Vagina (tissue), 2 donors: ENCODE measurements at regions of chr3 and their contacts with region 1.

Region 1: DNA sequence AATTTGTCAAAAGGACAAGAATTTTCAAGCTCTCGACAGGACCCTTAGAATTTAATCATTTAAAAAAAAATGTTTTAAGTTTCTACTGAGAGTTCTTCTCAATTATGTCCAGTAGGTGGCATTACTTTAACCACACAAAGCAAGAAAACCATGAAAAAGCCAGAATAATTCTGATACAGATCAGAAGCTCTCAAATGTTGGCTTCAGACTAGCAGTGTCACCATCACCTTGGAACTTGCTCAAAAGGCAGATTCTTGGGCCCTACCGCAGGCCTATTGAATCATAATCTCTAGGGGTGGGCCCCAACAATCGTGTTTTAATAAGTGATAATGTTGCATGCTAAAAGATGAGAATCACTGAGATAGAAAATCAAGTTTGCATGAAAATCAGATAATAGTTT is 99.5 kb upstream of the KCNMB2 start:
- DNase-seq: no peak
- H3K4me3 ChIP-seq: no peak overlapping the region
- H3K27ac ChIP-seq: no peak overlapping the region
- H3K4me1 ChIP-seq: peaks cover 4% of the 10 kb centered on the region
- H3K27me3 ChIP-seq: no peaks in the 10 kb centered on the region
- CTCF ChIP-seq: peak in 2 of 3 experiments; percentile 39 to 43
- POLR2A ChIP-seq: no peak

Region 2: DNA sequence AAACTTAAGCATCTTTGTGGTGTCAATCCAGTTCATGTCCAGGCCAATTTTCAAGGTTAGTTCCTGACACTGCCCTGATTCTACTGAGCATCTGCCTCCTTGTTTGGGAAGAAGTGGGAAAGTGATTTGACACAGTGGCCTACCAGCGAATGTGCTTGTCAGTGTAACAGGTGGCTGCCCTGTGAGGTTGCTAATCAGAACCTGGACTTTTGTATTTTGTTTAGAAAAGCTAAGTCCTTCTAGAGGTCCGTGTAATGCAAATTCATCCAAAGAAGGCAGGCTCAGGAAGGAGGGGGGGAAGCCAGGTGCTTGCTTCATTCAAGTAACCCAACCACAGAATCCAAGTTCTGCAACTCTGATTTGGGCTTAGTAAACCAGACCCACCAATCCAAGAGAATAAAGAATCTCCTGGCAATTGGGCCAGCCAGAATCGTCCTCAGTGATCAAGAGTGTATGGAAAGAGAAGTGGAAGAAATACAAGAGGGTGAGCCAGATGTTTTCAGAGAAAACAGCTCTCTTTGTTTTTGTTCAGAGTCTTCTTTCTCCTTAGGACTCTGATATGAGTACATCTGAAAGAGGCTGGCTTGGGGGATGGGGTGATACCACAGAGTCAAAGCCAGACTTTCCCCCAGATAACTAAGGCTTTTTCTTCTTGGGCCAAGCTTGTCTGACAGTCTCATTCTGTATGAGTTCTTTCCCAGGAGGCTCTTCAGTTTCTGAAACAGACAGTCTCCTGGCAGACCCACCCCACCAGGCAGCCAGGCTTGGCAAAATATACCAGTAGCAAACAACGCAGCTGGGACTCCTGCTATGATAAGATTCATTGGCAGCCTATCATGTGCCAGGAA is 730.6 kb before region 1 on chr3:
- intact Hi-C with region 1: no loop called
- DNase-seq: no peak
- H3K4me3 ChIP-seq: no peak overlapping the region
- H3K27ac ChIP-seq: no peak overlapping the region
- H3K4me1 ChIP-seq: peaks cover 5% of the 10 kb centered on the region
- H3K27me3 ChIP-seq: no peaks in the 10 kb centered on the region
- CTCF ChIP-seq: no peak
- POLR2A ChIP-seq: no peak

Region 3: GRCh38 chr3:178950676-178951075 is 513.9 kb after region 1 on chr3:
- intact Hi-C with region 1: loop called (anchors 5 kb)
- DNase-seq: no peak
- H3K4me3 ChIP-seq: no peak overlapping the region
- H3K27ac ChIP-seq: no peak overlapping the region
- H3K4me1 ChIP-seq: no peaks in the 10 kb centered on the region
- H3K27me3 ChIP-seq: no peaks in the 10 kb centered on the region
- CTCF ChIP-seq: no peak
- POLR2A ChIP-seq: no peak